ENCODE measurements at regions of chr12 and their contacts with region 1.

Region 1: GRCh38 chr12:85076688-85077430 is 40.7 kb downstream of the LRRIQ1 start:
- DNase-seq: no peak
- ATAC-seq: peak in 1 of 4 donors; percentile 58
- H3K4me3 ChIP-seq: no peak overlapping the region
- H3K27ac ChIP-seq: no peak overlapping the region
- H3K4me1 ChIP-seq: no peaks in the 10 kb centered on the region
- H3K27me3 ChIP-seq: no peaks in the 10 kb centered on the region
- CTCF ChIP-seq: peak; percentile 21

Region 2: DNA sequence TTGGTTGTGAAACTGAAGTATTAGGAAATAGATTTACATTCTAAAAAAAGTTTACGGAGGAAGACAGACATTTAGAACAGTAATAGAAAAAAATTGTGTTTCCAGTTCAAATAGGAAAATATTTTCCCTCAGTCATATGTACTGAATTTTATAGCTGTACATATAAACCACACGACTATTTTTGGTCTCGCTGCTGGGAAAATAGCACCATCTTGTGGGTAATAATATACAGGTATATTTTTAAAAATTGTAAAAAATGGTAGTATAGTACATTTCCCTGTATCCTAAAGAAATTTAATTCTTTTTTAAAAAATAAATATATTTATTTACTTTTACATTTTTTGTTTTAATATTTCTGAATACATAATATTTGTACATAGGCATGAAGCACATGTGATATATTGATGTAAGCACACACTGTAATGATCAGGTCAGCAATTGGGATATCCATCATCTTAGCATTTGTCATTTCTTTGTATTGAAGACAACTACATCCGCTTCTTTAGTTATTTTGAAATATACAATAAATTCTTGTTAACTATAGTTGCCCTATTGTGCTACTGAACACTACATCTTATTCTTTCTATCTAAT is 371.8 kb after region 1 on chr12:
- intact Hi-C with region 1: loop called in 1 of 2 experiments (anchors 10 kb)
- DNase-seq: no peak
- ATAC-seq: no peak
- H3K4me3 ChIP-seq: no peak overlapping the region
- H3K27ac ChIP-seq: no peak overlapping the region
- H3K4me1 ChIP-seq: no peaks in the 10 kb centered on the region
- H3K27me3 ChIP-seq: no peaks in the 10 kb centered on the region
- CTCF ChIP-seq: no peak